ENCODE measurements at regions of chrX and their contacts with region 1.

Region 1: DNA sequence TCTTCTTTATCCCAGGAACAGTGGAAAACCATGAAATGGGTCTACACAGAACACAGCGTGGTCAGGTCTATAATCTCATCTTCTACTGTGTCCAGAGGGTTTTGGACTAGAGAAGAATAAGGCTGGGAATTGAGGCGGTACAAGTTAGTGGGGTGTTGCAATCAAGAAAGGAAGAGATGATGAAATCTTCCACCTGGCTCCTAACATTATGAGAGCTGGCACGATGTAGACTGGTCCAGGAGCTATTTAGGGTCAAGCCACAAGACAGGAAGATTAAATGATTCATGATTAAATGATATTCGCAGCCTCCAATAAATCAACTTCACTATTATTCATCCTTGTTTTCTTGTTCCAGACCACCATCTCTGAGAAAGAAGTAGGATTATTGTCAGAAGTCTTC is 88.0 kb downstream of the ARSF start:
- DNase-seq: no peak
- H3K4me3 ChIP-seq: no peak overlapping the region
- H3K27ac ChIP-seq: no peak overlapping the region
- H3K4me1 ChIP-seq: no peaks in the 10 kb centered on the region
- H3K27me3 ChIP-seq: no peaks in the 10 kb centered on the region
- CTCF ChIP-seq: no peak
- POLR2A ChIP-seq: no peak

Region 2: DNA sequence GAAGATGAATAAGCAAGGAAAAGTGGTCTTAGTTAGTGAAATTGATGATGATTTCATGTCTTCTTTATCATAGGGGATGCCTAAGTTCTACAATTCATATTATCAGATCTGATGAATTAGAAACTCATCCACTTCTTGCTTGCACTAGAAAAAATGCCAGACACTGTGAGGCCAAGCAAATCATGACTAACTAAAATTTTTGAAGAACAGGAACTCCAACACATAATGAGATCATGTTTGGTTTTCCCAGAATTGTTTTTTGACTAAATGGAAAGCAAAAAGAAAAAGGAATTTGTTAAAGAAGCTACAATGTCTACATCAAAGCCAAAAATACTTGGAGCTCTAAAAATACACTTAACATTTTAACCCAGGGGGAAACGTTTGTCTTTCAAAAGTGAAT is 32.4 kb after region 1 on chrX:
- intact Hi-C with region 1: loop called (anchors 2 kb)
- DNase-seq: no peak
- H3K4me3 ChIP-seq: no peak overlapping the region
- H3K27ac ChIP-seq: no peak overlapping the region
- H3K4me1 ChIP-seq: no peaks in the 10 kb centered on the region
- H3K27me3 ChIP-seq: no peaks in the 10 kb centered on the region
- CTCF ChIP-seq: no peak
- POLR2A ChIP-seq: no peak

Measured in breast epithelium (tissue), 4 donors.